ENCODE measurements at regions of chr1 and their contacts with region 1.

Region 1: GRCh38 chr1:39034114-39034654 is 8.0 kb downstream of the NDUFS5 start:
- DNase-seq: no peak
- H3K4me3 ChIP-seq: no peak overlapping the region
- H3K27ac ChIP-seq: no peak overlapping the region
- H3K4me1 ChIP-seq: no peaks in the 10 kb centered on the region
- H3K27me3 ChIP-seq: no peaks in the 10 kb centered on the region
- CTCF ChIP-seq: no peak
- EP300 ChIP-seq: no peak
- POLR2A ChIP-seq: no peak
- RAD21 ChIP-seq: no peak

Region 2: DNA sequence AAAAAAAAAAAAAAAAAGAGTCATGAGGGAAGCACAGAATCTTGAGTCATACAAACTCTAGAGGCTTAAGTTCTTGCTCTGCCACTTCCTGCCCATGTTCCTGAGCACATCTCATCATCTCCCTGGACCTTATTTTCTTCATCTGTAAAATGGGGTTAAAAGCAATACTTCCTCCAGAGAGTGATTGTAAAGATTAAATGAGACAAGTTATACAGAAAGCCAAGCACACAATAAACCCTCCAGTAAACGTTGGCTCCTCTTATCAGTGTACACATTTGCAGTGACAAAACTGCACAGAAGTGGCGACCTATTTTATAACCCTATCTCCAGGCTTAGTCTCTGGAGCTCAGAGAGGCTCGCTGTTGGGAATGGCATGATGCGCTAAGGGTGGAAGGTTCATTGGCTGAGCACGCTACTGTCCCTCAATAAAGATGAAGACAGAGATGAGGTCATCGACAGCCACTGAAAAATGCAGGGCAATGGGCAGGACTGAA is 256.7 kb before region 1 on chr1:
- CTCF ChIA-PET with region 1: no interaction called
- POLR2A ChIA-PET with region 1: no interaction called
- DNase-seq: no peak
- H3K4me3 ChIP-seq: no peak overlapping the region
- H3K27ac ChIP-seq: no peak overlapping the region
- H3K4me1 ChIP-seq: no peaks in the 10 kb centered on the region; a peak in 2 of 7 replicates
- H3K27me3 ChIP-seq: no peaks in the 10 kb centered on the region
- CTCF ChIP-seq: no peak
- EP300 ChIP-seq: no peak
- POLR2A ChIP-seq: no peak
- RAD21 ChIP-seq: no peak

Region 3: GRCh38 chr1:39003794-39004193 is 30.4 kb before region 1 on chr1:
- CTCF ChIA-PET with region 1: interaction called, 3 read pairs
- POLR2A ChIA-PET with region 1: interaction called, 76 read pairs
- DNase-seq: no peak
- H3K4me3 ChIP-seq: no peak overlapping the region
- H3K27ac ChIP-seq: no peak overlapping the region
- H3K4me1 ChIP-seq: peaks cover 0 to 10% (median 7%) of the 10 kb centered on the region in 4 experiments
- H3K27me3 ChIP-seq: no peaks in the 10 kb centered on the region
- CTCF ChIP-seq: no peak
- EP300 ChIP-seq: no peak
- POLR2A ChIP-seq: no peak
- RAD21 ChIP-seq: no peak